B cell (primary cell): ENCODE measurements at regions of chr9 and their contacts with region 1.

Region 1: DNA sequence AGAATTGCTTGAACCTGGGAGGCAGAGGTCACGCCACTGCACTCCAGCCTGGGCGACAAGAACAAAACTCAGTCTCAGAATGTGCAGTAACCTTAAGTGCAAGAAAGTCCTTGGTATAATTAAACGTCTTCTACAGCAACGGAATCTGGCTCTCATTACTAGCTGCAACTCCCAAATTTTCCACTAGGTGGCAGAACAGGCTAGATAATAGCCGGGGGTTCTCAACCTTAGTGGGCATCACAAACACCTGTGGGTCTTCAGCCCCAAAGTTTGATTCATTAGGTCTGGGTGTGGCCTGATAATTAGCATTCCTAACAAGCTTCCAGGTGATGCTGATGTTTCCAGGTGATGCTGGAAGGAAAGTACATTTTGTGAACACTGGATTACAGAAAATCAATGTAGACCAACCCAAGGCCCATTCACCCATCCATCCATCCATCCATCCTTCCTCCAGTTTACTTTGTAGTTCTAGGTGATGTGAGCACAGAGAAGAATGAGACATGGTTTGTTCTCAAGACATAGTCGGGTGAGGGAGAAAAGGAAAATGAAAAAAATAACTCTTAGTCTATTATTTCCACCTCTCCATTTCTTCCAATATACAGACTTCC is 37.3 kb downstream of the FBXW2 start:
- DNase-seq: peak; percentile 80
- ATAC-seq: peak; percentile 82
- H3K4me3 ChIP-seq: no peak overlapping the region
- H3K4me3 Mint-ChIP-seq: no peak overlapping the region
- H3K27ac ChIP-seq: peak overlapping the region in 1 of 2 donors; percentile 68
- H3K27ac Mint-ChIP-seq: peak overlapping the region; percentile 21
- H3K4me1 ChIP-seq: peaks cover 5 to 13% of the 10 kb centered on the region in 2 donors
- H3K4me1 Mint-ChIP-seq: peaks cover 26% of the 10 kb centered on the region
- H3K27me3 ChIP-seq: no peaks in the 10 kb centered on the region
- H3K27me3 Mint-ChIP-seq: no peaks in the 10 kb centered on the region
- CTCF ChIP-seq: peak; percentile 94

Region 2: DNA sequence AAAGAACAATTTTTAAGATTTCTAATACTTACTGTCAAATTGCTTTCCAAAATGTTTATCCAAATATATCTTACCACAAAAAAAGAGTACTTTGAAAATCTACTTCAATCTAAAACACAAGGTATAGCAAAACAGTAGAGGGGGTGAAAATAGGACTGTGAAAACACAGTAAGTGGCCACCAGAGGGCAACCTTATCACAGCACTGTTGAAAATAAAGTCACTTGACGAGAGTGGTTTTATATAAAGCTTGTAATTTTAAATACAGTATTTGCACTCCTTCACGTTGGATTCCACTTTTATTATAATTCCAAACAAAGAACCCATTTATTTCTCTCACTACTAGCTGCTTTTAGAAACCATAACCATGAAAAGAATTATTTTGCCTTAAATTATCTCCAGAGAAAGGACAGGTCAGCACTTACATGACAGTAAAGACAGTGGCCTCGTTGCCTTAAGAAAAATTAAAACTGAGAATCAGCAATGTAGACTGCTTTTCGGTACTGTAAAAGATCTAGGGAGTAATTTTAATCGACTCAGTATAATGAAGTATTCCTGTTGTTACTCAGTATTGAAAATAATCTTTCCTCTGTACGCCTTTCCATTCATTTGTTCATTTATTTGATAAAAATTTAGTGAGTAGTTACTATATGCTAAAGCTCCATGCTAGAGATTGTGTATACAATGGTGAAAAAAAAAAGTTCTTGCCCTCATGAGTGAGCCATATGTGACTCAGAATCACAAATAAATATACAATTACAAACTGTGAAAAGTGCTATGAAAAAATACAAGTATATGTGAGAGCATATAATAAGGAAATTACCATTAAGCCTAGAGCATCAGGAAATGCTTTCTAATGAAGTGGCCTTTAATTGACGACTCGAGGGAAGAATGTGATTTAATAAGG is 135.9 kb before region 1 on chr9:
- CTCF ChIA-PET with region 1: interaction called, 14 read pairs
- POLR2A ChIA-PET with region 1: no interaction called
- intact Hi-C with region 1: loop called (anchors 5 kb)
- DNase-seq: peak; percentile 71
- ATAC-seq: peak; percentile 68
- H3K4me3 ChIP-seq: no peak overlapping the region
- H3K4me3 Mint-ChIP-seq: no peak overlapping the region
- H3K27ac ChIP-seq: no peak overlapping the region
- H3K27ac Mint-ChIP-seq: no peak overlapping the region
- H3K4me1 ChIP-seq: no peaks in the 10 kb centered on the region
- H3K4me1 Mint-ChIP-seq: peaks cover 2% of the 10 kb centered on the region
- H3K27me3 ChIP-seq: no peaks in the 10 kb centered on the region
- H3K27me3 Mint-ChIP-seq: no peaks in the 10 kb centered on the region
- CTCF ChIP-seq: peak; percentile 97

Region 3: DNA sequence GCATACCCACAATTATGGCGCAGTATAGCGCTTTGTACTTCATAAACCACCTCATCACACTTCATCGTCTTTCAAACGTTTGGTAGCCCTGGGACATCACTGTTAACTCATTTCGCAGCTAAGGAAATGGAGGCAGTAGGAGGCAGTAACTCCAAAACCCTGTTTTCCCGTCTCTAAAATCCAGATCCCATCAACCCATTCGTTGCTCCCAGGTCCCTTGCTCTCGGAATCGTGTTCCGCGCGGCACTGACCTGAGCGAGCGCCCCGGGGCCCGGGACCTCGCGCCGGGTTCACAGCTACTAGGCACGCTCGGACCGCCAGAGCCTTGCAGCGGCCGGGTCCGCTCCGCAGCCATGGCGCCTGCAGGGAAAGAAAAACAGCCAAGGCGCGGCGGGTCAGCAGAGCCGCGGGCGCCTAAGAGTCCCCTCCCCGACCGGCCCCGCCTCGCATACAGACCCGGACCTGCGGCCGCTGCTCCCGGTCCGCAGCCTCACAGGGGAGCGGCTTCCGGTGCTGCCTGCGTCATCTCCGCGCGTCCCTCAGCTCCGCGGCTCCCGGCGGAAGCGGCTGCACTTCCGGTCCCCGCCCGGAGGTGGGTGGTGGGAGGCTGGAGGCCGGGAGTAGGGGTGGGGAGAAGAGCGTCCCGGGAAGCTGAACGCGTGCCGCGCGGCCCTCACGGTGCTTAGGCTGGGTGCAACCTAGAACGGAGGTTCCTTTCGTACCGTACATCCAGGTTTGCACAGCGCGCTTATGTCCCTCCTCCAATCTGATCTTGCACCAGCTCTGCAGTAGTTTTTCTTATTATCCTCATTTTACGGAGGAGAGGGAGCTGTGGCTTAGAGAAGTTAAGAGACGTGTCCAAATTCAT is 37.2 kb after region 1 on chr9 and contains the start of gene FBXW2:
- CTCF ChIA-PET with region 1: interaction called, 11 read pairs
- POLR2A ChIA-PET with region 1: interaction called, 3 read pairs
- intact Hi-C with region 1: no loop called
- DNase-seq: peak; percentile 88
- ATAC-seq: peak; percentile 94
- H3K4me3 ChIP-seq: peak within 1 kb of the TSS; percentile 73 to 96 (median 89)
- H3K4me3 Mint-ChIP-seq: peak within 1 kb of the TSS; percentile 92
- H3K27ac ChIP-seq: peak within 1 kb of the TSS; percentile 77 to 87
- H3K27ac Mint-ChIP-seq: peak within 1 kb of the TSS; percentile 92
- H3K4me1 ChIP-seq: peaks cover 18 to 25% of the 10 kb centered on the region in 2 donors
- H3K4me1 Mint-ChIP-seq: peaks cover 38% of the 10 kb centered on the region
- H3K27me3 ChIP-seq: no peaks in the 10 kb centered on the region
- H3K27me3 Mint-ChIP-seq: no peaks in the 10 kb centered on the region
- CTCF ChIP-seq: no peak
- total RNA-seq, gene FBXW2: 70.6 and 73.3 TPM in 2 replicates

Region 4: DNA sequence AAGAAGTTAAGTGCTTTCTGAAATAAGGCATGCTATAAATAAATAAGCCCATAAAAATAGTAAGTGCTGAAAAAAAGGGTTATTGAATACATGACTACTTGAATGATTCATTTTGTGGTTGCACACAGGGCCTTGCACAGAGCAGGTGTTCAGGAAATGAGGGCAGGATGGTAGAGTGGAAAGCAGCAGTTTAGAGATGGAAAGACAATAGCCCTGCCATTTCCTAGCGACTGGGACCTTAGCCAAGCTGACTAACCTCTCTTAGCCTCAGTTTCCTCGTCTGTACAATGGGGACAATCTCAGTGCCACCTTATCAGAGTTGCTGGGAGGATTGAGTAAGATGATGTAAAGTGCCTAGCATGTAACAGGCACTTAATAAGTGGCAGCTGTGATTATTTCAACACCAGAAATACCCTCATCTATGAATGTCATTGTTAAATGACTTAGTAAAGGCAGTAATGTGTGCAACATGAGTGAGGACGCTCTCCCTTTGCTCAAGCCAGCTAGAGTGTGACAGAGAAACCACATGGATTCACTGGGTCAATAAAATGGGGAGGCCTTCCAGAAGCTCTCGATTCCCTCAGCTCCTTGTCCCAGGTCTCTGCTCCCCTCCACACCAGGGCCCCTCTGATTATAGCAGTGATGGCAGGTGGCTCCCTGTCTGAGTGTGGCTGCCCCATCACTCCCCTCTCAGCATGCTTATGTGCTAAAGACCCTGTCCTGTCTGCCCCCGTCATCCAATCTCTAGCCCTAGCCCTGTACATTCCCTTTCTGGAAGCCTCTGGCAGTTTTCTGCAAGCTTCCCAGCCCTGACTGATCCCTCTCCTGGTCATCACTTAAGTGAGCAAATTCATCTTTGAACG is 137.0 kb after region 1 on chr9:
- CTCF ChIA-PET with region 1: no interaction called
- POLR2A ChIA-PET with region 1: no interaction called
- intact Hi-C with region 1: no loop called
- DNase-seq: peak; percentile 79
- ATAC-seq: peak; percentile 88
- H3K4me3 ChIP-seq: peak overlapping the region in 1 of 5 experiments; percentile 13
- H3K4me3 Mint-ChIP-seq: peak overlapping the region; percentile 71
- H3K27ac ChIP-seq: peak overlapping the region; percentile 51 to 65
- H3K27ac Mint-ChIP-seq: peak overlapping the region; percentile 79
- H3K4me1 ChIP-seq: peaks cover 48 to 49% of the 10 kb centered on the region in 2 donors
- H3K4me1 Mint-ChIP-seq: peaks cover 50% of the 10 kb centered on the region
- H3K27me3 ChIP-seq: no peaks in the 10 kb centered on the region
- H3K27me3 Mint-ChIP-seq: no peaks in the 10 kb centered on the region
- CTCF ChIP-seq: no peak

Region 5: GRCh38 chr9:120985810-120986222 is 229.9 kb after region 1 on chr9:
- CTCF ChIA-PET with region 1: interaction called, 20 read pairs
- POLR2A ChIA-PET with region 1: no interaction called
- intact Hi-C with region 1: no loop called
- DNase-seq: peak; percentile 26
- ATAC-seq: no peak
- H3K4me3 ChIP-seq: no peak overlapping the region
- H3K4me3 Mint-ChIP-seq: no peak overlapping the region
- H3K27ac ChIP-seq: no peak overlapping the region
- H3K27ac Mint-ChIP-seq: no peak overlapping the region
- H3K4me1 ChIP-seq: peaks cover 0 to 3% of the 10 kb centered on the region in 2 donors
- H3K4me1 Mint-ChIP-seq: peaks cover 4% of the 10 kb centered on the region
- H3K27me3 ChIP-seq: no peaks in the 10 kb centered on the region
- H3K27me3 Mint-ChIP-seq: no peaks in the 10 kb centered on the region
- CTCF ChIP-seq: no peak

Region 6: DNA sequence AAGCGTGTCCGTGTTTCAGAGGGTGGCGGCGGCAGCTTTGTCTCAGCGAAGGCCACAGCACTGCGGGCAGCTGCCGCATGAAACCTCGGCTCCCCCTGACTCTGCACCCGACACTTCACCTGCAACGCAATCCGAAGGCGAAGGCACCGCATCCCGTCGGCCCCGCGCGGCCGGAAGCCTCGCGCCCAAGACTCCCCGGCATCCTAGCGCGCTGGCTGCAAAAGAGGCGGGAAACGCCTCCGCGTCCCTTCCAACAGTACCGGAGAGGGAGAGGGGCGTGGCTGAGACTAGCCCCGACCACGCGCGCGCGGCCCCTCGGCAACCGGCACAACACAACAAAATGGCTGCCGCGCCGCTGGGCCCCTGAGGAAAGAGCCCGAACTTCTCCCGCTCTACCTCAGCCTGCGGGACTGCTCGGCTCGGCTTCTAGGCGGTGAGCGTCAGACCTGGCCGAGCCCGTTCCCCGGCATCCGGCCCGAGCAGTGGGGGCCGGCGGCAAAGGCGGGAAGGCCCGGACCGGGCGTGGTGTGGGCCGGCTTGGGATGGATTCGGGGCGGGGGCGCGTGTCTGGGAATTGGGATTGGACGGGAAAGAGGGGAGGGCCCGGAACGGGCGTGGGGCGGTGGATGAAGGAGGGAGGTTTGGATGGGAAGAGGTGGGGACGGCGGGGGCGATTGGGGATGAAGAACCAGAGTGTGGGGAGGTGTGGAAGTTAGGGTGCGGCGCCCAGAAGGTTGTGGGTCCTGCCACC is 318.9 kb after region 1 on chr9 and contains the start of gene CNTRL:
- CTCF ChIA-PET with region 1: interaction called, 20 read pairs
- POLR2A ChIA-PET with region 1: no interaction called
- intact Hi-C with region 1: no loop called
- DNase-seq: peak; percentile 85
- ATAC-seq: peak; percentile 72
- H3K4me3 ChIP-seq: peak within 1 kb of the TSS; percentile 80 to 99 (median 92)
- H3K4me3 Mint-ChIP-seq: peak within 1 kb of the TSS; percentile 100
- H3K27ac ChIP-seq: peak within 1 kb of the TSS; percentile 86 to 99
- H3K27ac Mint-ChIP-seq: peak within 1 kb of the TSS; percentile 94
- H3K4me1 ChIP-seq: peaks cover 42 to 49% of the 10 kb centered on the region in 2 donors
- H3K4me1 Mint-ChIP-seq: peaks cover 64% of the 10 kb centered on the region
- H3K27me3 ChIP-seq: no peaks in the 10 kb centered on the region
- H3K27me3 Mint-ChIP-seq: no peaks in the 10 kb centered on the region
- CTCF ChIP-seq: no peak
- total RNA-seq, gene CNTRL: 146 and 150 TPM in 2 replicates

Region 7: GRCh38 chr9:121321016-121321503 is 565.1 kb after region 1 on chr9:
- CTCF ChIA-PET with region 1: interaction called, 13 read pairs
- POLR2A ChIA-PET with region 1: no interaction called
- intact Hi-C with region 1: no loop called
- DNase-seq: no peak
- ATAC-seq: no peak
- H3K4me3 ChIP-seq: no peak overlapping the region
- H3K4me3 Mint-ChIP-seq: no peak overlapping the region
- H3K27ac ChIP-seq: no peak overlapping the region
- H3K27ac Mint-ChIP-seq: no peak overlapping the region
- H3K4me1 ChIP-seq: no peaks in the 10 kb centered on the region
- H3K4me1 Mint-ChIP-seq: no peaks in the 10 kb centered on the region
- H3K27me3 ChIP-seq: no peaks in the 10 kb centered on the region
- H3K27me3 Mint-ChIP-seq: no peaks in the 10 kb centered on the region
- CTCF ChIP-seq: no peak

Region 8: GRCh38 chr9:121545875-121546423 is 790.0 kb after region 1 on chr9:
- CTCF ChIA-PET with region 1: interaction called, 3 read pairs
- POLR2A ChIA-PET with region 1: no interaction called
- intact Hi-C with region 1: loop called (anchors 5 kb)
- DNase-seq: peak; percentile 77
- ATAC-seq: peak; percentile 87
- H3K4me3 ChIP-seq: no peak overlapping the region
- H3K4me3 Mint-ChIP-seq: no peak overlapping the region
- H3K27ac ChIP-seq: no peak overlapping the region
- H3K27ac Mint-ChIP-seq: no peak overlapping the region
- H3K4me1 ChIP-seq: peaks cover 16% of the 10 kb centered on the region in 2 donors
- H3K4me1 Mint-ChIP-seq: peaks cover 5% of the 10 kb centered on the region
- H3K27me3 ChIP-seq: peaks cover 0 to 38% (median 16%) of the 10 kb centered on the region in 4 experiments
- H3K27me3 Mint-ChIP-seq: peaks cover 29% of the 10 kb centered on the region
- CTCF ChIP-seq: peak; percentile 85